Posterior vena cava (tissue), 2 donors: ENCODE measurements at regions of chr2 and their contacts with region 1.

Region 1: GRCh38 chr2:202221873-202222272 is 16.5 kb downstream of the SUMO1 start:
- DNase-seq: no peak

Region 2: GRCh38 chr2:202299712-202300111 is 77.8 kb after region 1 on chr2:
- intact Hi-C with region 1: loop called in 1 of 2 experiments (anchors 2 kb)
- DNase-seq: no peak

Region 3: DNA sequence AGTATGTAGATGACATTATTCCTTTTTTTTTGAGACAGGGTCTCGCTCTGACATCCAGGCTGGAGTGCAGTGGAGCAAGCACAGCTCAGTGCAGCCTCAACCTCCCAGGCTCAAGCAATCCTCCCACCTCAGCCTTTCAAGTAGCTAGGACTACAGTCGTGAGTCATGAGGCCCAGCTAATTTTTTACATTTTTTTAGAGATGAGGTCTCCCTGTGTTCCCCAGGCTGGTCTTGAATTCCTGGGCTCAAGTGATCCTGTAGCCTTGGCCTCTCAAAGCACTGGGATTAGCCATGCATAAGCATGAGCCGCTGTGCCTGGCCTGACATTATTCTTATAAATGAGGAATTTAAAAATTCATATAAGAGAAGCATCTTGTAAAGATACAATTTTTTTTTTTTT is 499.7 kb after region 1 on chr2:
- intact Hi-C with region 1: no loop called
- DNase-seq: no peak